BJ (cell line): ENCODE measurements at regions of chr11 and their contacts with region 1.

Region 1: DNA sequence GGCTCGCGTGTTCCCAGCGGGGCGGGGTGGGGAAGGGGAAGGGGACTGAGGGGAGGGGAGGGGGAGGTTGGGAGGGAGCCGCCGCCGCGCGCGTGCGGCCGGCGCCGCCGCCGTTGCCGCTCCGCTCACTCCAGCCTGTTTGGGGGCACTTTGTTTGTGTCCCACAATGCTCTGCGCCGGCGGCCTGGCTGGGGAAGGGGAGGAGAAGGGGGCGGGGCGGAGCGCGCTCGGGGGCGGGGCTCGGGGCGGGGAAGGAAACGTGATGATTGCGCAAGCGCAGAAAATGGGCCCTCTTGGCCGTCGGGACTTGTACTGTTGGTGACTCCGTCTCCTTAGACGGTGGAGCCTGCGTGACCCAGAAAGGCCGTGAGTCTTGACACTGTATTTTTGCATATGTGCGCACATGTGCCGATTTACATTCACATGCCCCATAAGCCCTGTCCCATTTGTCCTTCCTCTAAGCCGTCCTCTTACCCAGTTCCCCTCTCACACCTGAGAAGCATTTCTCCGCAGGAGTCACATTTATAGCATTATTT is at the start of gene ZBTB44:
- DNase-seq: peak; percentile 16
- H3K4me3 ChIP-seq: peak within 1 kb of the TSS; percentile 78
- H3K27me3 ChIP-seq: no peaks in the 10 kb centered on the region
- CTCF ChIP-seq: no peak
- polyA plus RNA-seq, gene ZBTB44: 11.5 and 18.2 TPM in 2 replicates

Region 2: GRCh38 chr11:130300567-130300966 is 14.3 kb before region 1 on chr11:
- CTCF ChIA-PET with region 1: no interaction called
- POLR2A ChIA-PET with region 1: interaction called, 19 read pairs
- DNase-seq: no peak
- H3K4me3 ChIP-seq: no peak overlapping the region
- H3K27me3 ChIP-seq: no peaks in the 10 kb centered on the region
- CTCF ChIP-seq: no peak

Region 3: GRCh38 chr11:130330101-130330684 is 15.4 kb after region 1 on chr11:
- CTCF ChIA-PET with region 1: no interaction called
- POLR2A ChIA-PET with region 1: no interaction called
- DNase-seq: no peak
- H3K4me3 ChIP-seq: no peak overlapping the region
- H3K27me3 ChIP-seq: peaks cover 2% of the 10 kb centered on the region; the same call in 1 of the 2 replicates
- CTCF ChIP-seq: no peak

Region 4: DNA sequence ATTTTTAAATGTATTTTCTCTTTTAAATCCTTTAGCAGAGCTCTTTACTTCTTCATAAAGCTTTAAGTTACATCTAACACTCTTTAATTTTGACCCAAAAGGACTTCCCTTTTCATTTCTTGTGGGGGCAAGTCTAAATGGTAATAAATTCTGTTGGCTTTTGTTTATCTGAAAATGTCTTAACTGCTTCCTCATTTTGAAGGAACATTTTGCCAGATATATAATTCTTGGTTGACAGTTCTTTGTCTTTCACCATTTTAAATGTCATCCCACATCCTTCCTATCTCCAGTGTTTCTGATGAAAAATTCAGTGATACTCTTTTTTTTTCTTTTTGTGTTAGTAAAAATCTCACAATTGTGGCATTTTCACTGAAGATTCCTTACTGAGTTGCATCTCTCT is 44.6 kb after region 1 on chr11:
- CTCF ChIA-PET with region 1: no interaction called
- POLR2A ChIA-PET with region 1: no interaction called
- DNase-seq: no peak
- H3K4me3 ChIP-seq: no peak overlapping the region
- H3K27me3 ChIP-seq: peaks cover 2% of the 10 kb centered on the region; the same call in 1 of the 2 replicates
- CTCF ChIP-seq: no peak